ENCODE measurements at regions of chr16 and their contacts with region 1.

Region 1: GRCh38 chr16:61831351-61831917 is 204.8 kb downstream of the CDH8 start:
- DNase-seq: no peak
- ATAC-seq: no peak
- H3K4me3 ChIP-seq: no peak overlapping the region
- H3K4me3 Mint-ChIP-seq: no peak overlapping the region
- H3K27ac ChIP-seq: no peak overlapping the region
- H3K27ac Mint-ChIP-seq: no peak overlapping the region
- H3K4me1 ChIP-seq: no peaks in the 10 kb centered on the region
- H3K4me1 Mint-ChIP-seq: no peaks in the 10 kb centered on the region
- H3K27me3 ChIP-seq: no peaks in the 10 kb centered on the region
- H3K27me3 Mint-ChIP-seq: no peaks in the 10 kb centered on the region

Region 2: GRCh38 chr16:61818850-61819249 is 12.6 kb before region 1 on chr16:
- CTCF ChIA-PET with region 1: no interaction called
- POLR2A ChIA-PET with region 1: no interaction called
- intact Hi-C with region 1: loop called in 1 of 2 experiments (anchors 1 kb)
- DNase-seq: no peak
- ATAC-seq: no peak
- H3K4me3 ChIP-seq: no peak overlapping the region
- H3K4me3 Mint-ChIP-seq: no peak overlapping the region
- H3K27ac ChIP-seq: no peak overlapping the region
- H3K27ac Mint-ChIP-seq: no peak overlapping the region
- H3K4me1 ChIP-seq: no peaks in the 10 kb centered on the region
- H3K4me1 Mint-ChIP-seq: no peaks in the 10 kb centered on the region
- H3K27me3 ChIP-seq: no peaks in the 10 kb centered on the region
- H3K27me3 Mint-ChIP-seq: no peaks in the 10 kb centered on the region

Region 3: DNA sequence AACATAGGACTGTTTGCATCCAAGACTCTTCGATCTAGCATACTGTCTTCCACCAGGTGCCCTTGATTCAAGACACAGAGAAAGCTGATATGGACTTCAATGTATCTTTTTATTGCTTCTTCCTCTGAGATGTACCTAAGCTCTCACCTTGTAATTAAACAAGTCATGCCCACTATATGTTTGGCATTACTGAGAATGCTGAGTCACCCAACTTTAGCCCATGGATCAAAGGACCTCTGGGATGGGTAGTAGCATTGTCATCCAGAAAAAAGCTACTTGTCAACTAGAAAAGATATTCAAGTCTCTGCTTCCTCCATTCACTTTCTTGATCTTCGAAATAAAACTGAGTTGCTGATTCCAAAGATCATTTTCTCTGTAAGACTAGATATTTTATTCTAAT is 167.0 kb after region 1 on chr16:
- CTCF ChIA-PET with region 1: no interaction called
- POLR2A ChIA-PET with region 1: no interaction called
- intact Hi-C with region 1: no loop called
- DNase-seq: no peak
- ATAC-seq: no peak
- H3K4me3 ChIP-seq: no peak overlapping the region
- H3K4me3 Mint-ChIP-seq: no peak overlapping the region
- H3K27ac ChIP-seq: no peak overlapping the region
- H3K27ac Mint-ChIP-seq: no peak overlapping the region
- H3K4me1 ChIP-seq: no peaks in the 10 kb centered on the region
- H3K4me1 Mint-ChIP-seq: no peaks in the 10 kb centered on the region
- H3K27me3 ChIP-seq: no peaks in the 10 kb centered on the region
- H3K27me3 Mint-ChIP-seq: no peaks in the 10 kb centered on the region

Measured in naive thymus-derived CD4-positive, alpha-beta T cell (primary cell).